ENCODE measurements at regions of chr7 and their contacts with region 1.

Region 1: DNA sequence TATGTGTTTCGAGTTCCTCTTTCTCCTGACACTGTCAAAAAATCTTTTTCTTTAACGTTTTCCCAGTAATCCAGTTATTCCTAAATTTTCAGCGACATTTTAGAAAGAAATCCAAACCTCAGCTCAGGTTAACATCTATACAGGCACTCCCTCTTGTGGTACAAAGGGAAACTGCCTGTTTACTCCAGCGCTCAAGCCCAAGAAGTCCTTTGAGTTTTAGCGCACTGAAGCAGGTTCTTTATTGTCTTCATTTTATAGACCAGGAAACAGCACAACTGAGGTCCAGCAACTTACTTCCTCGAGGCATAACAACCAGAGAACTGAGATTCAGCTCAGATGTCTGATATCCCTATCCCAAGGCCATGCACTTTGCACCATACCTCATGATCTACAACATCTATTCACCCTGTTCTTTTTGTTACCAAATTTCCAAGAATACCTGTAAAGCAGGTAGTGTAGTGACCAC is 287.2 kb upstream of the MKLN1 start:
- DNase-seq: peak; percentile 77
- H3K4me3 Mint-ChIP-seq: peak overlapping the region; percentile 53
- H3K27ac Mint-ChIP-seq: peak overlapping the region; percentile 78
- H3K4me1 Mint-ChIP-seq: peaks cover 31% of the 10 kb centered on the region
- H3K27me3 Mint-ChIP-seq: no peaks in the 10 kb centered on the region
- CTCF ChIP-seq: peak; percentile 87

Region 2: DNA sequence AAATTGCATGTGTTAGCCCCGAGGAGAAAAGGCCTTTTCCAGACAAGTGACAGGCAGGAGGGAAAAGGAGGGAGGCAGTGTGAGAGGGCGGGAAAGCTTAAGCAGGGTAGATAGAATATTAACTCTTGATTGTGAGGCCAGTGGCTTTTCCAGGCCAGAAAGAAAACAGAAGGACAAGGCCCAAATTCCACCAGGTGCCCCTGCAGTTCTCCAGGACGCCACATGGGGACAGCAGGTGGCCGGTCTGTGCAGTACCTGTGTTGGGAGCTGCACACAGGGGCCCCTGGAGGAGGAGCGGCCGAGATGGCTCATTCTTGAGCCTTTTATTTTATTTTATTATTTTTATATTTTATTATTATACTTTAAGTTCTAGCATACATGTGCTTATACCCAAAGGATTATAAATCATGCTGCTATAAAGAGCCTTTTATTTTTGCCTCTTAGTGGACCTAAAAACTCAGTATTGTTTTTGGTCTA is 165.2 kb before region 1 on chr7:
- CTCF ChIA-PET with region 1: interaction called, 13 read pairs
- POLR2A ChIA-PET with region 1: no interaction called
- intact Hi-C with region 1: no loop called
- DNase-seq: peak; percentile 69
- H3K4me3 Mint-ChIP-seq: no peak overlapping the region
- H3K27ac Mint-ChIP-seq: peak overlapping the region; percentile 89
- H3K4me1 Mint-ChIP-seq: peaks cover 41% of the 10 kb centered on the region
- H3K27me3 Mint-ChIP-seq: no peaks in the 10 kb centered on the region
- CTCF ChIP-seq: peak; percentile 92

Region 3: GRCh38 chr7:130941322-130942210 is 98.9 kb before region 1 on chr7:
- CTCF ChIA-PET with region 1: interaction called, 4 read pairs
- POLR2A ChIA-PET with region 1: interaction called, 18 read pairs
- intact Hi-C with region 1: no loop called
- DNase-seq: peak; percentile 41
- H3K4me3 Mint-ChIP-seq: peak overlapping the region; percentile 76
- H3K27ac Mint-ChIP-seq: peak overlapping the region; percentile 90
- H3K4me1 Mint-ChIP-seq: peaks cover 70% of the 10 kb centered on the region
- H3K27me3 Mint-ChIP-seq: no peaks in the 10 kb centered on the region
- CTCF ChIP-seq: no peak

Region 4: DNA sequence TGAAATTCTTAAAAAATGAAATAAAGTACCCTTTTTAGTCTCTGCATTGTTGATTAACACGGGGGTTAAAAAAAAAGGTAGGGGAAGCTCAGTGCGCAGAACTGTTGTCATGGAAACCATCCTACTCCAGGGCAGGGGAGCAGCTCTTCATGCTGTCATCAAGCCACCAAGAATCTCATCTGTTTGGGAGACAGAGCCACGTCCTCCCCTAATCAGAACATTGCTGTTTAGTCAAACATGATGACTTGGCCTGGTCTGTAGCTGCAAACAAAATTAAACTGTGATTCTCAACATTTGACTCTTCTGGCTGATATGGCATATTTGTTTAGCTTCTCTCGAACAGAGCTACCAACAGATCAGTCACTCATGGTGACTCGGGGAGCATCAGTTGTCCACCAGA is 52.1 kb before region 1 on chr7:
- CTCF ChIA-PET with region 1: interaction called, 72 read pairs
- POLR2A ChIA-PET with region 1: no interaction called
- intact Hi-C with region 1: no loop called
- DNase-seq: no peak
- H3K4me3 Mint-ChIP-seq: no peak overlapping the region
- H3K27ac Mint-ChIP-seq: no peak overlapping the region
- H3K4me1 Mint-ChIP-seq: peaks cover 45% of the 10 kb centered on the region
- H3K27me3 Mint-ChIP-seq: no peaks in the 10 kb centered on the region
- CTCF ChIP-seq: no peak

Region 5: GRCh38 chr7:131015655-131015954 is 24.9 kb before region 1 on chr7:
- CTCF ChIA-PET with region 1: interaction called, 24 read pairs
- POLR2A ChIA-PET with region 1: interaction called, 18 read pairs
- intact Hi-C with region 1: loop called (anchors 2 kb)
- DNase-seq: peak; percentile 54
- H3K4me3 Mint-ChIP-seq: no peak overlapping the region
- H3K27ac Mint-ChIP-seq: no peak overlapping the region
- H3K4me1 Mint-ChIP-seq: peaks cover 43% of the 10 kb centered on the region
- H3K27me3 Mint-ChIP-seq: no peaks in the 10 kb centered on the region
- CTCF ChIP-seq: no peak

Region 6: DNA sequence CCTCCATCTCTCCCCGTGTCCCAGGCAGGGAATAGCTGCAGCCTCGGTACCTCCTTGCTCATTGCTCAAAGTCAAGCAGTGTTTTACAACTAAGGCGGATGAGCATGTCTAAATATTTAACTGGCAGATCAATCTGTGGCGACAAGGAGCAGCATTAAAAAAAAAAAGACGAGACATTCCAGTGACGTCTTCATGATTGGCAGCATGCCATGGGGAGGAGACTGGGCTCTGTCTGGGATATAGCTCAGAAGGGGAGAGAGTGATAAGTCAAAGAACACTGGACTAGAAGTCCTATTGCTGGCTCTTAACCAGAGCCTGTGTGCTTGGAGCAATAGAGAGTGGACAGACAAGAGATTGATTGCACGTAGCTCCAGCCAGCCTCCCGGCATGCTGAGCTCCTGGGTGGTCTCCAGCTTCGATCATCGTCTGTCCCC is 803.4 kb after region 1 on chr7:
- CTCF ChIA-PET with region 1: no interaction called
- POLR2A ChIA-PET with region 1: no interaction called
- intact Hi-C with region 1: no loop called
- DNase-seq: peak; percentile 43
- H3K4me3 Mint-ChIP-seq: no peak overlapping the region
- H3K27ac Mint-ChIP-seq: no peak overlapping the region
- H3K4me1 Mint-ChIP-seq: no peaks in the 10 kb centered on the region
- H3K27me3 Mint-ChIP-seq: no peaks in the 10 kb centered on the region
- CTCF ChIP-seq: no peak